ENCODE measurements at regions of chr7 and their contacts with region 1.

Region 1: DNA sequence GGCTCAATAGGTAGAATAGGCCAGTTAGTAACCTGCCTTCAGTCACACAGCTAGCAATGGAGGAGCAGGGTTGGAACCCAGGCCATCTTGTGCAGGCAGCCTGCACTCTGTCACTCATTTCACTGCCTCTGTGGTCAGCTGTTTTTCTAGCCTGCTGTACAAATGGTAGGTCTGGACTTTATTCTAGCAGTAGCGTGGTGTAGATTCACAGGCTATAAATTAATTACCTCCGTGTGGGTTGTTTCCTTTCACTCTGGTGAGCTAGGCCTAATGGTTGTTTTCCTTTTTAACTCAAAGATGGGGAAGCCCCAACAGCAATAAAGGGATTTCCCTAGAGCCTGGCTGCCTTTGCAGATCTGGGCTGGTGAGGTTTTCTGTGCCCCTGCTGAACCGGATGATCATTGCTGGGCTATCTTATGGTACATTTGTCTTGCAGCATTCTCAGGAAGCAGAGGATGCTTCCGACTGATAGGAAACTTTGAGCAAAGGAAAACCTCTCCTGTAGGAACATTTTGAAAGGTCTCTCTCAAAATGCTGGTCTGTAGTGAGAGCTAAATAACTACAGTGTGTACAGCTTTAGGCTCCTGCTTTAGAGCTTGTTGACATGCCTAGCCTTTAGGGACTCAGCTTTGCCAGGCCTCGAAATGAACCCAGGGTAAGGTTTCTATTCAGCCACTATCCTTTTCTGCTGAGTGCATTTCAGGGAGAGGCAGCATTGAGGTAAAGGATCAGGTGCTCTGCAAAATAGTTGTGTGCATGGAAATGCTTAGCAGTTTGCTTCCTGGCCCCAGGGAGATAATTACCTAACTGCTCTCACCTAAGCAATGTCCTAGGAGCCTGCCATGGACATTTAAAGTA is 157.4 kb downstream of the ST7 start:
- DNase-seq: peak; percentile 70
- ATAC-seq: peak; percentile 97
- H3K4me3 ChIP-seq: peak overlapping the region; percentile 41
- H3K27ac ChIP-seq: peak overlapping the region; percentile 63
- H3K4me1 ChIP-seq: peaks cover 10% of the 10 kb centered on the region
- H3K27me3 ChIP-seq: no peaks in the 10 kb centered on the region
- CTCF ChIP-seq: no peak
- EP300 ChIP-seq: 0 out of 4 replicates have a peak, but pooled peaks of 1 of the 2 experiments have one; percentile 20
- POLR2A ChIP-seq: 0 out of 2 replicates have a peak, but pooled peaks have one; percentile 21
- RAD21 ChIP-seq: 0 out of 2 replicates have a peak, but pooled peaks have one; percentile 6

Region 2: DNA sequence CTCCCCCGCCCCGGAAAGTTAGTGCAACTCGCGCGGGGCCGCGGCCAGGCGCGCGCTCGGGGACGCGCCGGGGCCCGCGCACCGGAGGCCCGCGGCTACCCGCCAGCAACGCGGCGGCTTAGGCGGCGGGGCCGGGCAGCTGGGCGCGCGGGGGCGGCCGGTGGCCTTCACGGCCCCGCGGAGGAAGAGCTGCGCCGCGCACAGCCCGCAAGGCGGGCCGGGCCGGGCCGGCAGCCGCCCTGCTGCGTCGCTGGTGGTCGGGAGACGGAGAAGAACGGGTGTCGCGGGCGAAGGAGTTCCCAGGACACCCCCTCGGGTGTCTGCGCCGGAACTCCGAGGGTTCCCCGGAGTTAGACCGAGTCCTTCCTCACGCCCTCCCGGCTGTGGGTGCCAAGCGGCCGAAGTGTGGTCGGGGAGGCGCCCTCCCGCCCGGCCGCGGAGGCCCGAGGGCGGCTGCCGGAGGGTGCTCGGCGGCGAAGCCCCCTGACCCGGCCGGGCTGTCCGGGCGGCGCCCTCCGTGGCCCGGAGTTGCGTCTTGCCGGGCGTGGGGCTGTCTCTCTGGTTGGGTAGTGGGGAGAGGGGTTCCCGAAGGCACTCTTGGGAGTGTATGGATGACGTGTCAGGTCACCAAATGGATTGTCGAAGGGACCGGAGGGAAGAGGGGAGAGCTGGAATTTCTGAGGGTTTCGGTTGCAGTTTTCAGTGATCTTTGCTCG is 156.8 kb before region 1 on chr7:
- CTCF ChIA-PET with region 1: interaction called, 3 read pairs
- POLR2A ChIA-PET with region 1: interaction called, 3 read pairs
- RAD21 ChIA-PET with region 1: interaction called, 10 read pairs
- SMC1A ChIA-PET with region 1: interaction called, 7 read pairs
- in situ Hi-C with region 1: no loop called
- intact Hi-C with region 1: no loop called
- DNase-seq: no peak
- ATAC-seq: peak; percentile 21
- H3K4me3 ChIP-seq: peak overlapping the region; percentile 79
- H3K27ac ChIP-seq: peak overlapping the region; percentile 98
- H3K4me1 ChIP-seq: peaks cover 22% of the 10 kb centered on the region
- H3K27me3 ChIP-seq: no peaks in the 10 kb centered on the region
- CTCF ChIP-seq: no peak
- EP300 ChIP-seq: peak in 1 of 2 experiments; percentile 19; a peak in 1 of 4 replicates
- POLR2A ChIP-seq: peak; percentile 62
- RAD21 ChIP-seq: no peak

Region 3: GRCh38 chr7:117008883-117009531 is 101.7 kb before region 1 on chr7:
- CTCF ChIA-PET with region 1: interaction called, 15 read pairs
- POLR2A ChIA-PET with region 1: interaction called, 4 read pairs
- RAD21 ChIA-PET with region 1: interaction called, 14 read pairs
- SMC1A ChIA-PET with region 1: interaction called, 158 read pairs
- in situ Hi-C with region 1: no loop called
- intact Hi-C with region 1: no loop called
- DNase-seq: no peak
- ATAC-seq: peak; percentile 9
- H3K4me3 ChIP-seq: 0 out of 2 replicates have a peak overlapping the region, but pooled peaks have one; percentile 9
- H3K27ac ChIP-seq: peak overlapping the region; percentile 100
- H3K4me1 ChIP-seq: peaks cover 46% of the 10 kb centered on the region
- H3K27me3 ChIP-seq: no peaks in the 10 kb centered on the region
- CTCF ChIP-seq: no peak
- EP300 ChIP-seq: peak in 1 of 2 experiments; percentile 50; a peak in 1 of 4 replicates
- POLR2A ChIP-seq: no peak
- RAD21 ChIP-seq: no peak

Region 4: DNA sequence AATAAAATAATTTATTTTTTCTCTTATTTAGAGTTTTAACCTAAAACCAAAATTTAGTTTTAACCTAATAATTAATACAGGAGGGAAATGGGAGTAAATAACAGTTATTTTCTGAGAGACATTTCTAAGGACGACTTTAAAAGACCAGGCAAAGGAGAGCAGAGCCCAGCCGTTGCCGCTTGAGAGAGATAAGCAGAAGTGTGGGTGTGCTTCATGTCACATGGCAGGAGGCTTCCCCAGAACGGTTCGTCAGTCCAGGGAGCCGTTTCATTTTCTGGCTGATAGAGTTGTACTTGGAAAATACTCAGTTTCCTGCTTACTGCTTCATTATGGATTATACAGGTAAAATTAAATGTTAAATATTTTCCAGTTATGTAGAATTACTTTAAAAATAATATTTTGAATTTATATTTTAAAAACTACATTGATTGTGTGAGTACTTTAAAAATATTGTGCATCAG is 96.0 kb before region 1 on chr7:
- CTCF ChIA-PET with region 1: interaction called, 15 read pairs
- POLR2A ChIA-PET with region 1: interaction called, 3 read pairs
- RAD21 ChIA-PET with region 1: interaction called, 14 read pairs
- SMC1A ChIA-PET with region 1: interaction called, 158 read pairs
- in situ Hi-C with region 1: no loop called
- intact Hi-C with region 1: no loop called
- DNase-seq: no peak
- ATAC-seq: peak; percentile 52
- H3K4me3 ChIP-seq: peak overlapping the region; percentile 66; the same call in 1 of the 2 replicates
- H3K27ac ChIP-seq: peak overlapping the region; percentile 79
- H3K4me1 ChIP-seq: peaks cover 43% of the 10 kb centered on the region
- H3K27me3 ChIP-seq: no peaks in the 10 kb centered on the region
- CTCF ChIP-seq: no peak
- EP300 ChIP-seq: no peak
- POLR2A ChIP-seq: peak; percentile 51; the same call in 1 of the 2 replicates
- RAD21 ChIP-seq: no peak

Region 5: DNA sequence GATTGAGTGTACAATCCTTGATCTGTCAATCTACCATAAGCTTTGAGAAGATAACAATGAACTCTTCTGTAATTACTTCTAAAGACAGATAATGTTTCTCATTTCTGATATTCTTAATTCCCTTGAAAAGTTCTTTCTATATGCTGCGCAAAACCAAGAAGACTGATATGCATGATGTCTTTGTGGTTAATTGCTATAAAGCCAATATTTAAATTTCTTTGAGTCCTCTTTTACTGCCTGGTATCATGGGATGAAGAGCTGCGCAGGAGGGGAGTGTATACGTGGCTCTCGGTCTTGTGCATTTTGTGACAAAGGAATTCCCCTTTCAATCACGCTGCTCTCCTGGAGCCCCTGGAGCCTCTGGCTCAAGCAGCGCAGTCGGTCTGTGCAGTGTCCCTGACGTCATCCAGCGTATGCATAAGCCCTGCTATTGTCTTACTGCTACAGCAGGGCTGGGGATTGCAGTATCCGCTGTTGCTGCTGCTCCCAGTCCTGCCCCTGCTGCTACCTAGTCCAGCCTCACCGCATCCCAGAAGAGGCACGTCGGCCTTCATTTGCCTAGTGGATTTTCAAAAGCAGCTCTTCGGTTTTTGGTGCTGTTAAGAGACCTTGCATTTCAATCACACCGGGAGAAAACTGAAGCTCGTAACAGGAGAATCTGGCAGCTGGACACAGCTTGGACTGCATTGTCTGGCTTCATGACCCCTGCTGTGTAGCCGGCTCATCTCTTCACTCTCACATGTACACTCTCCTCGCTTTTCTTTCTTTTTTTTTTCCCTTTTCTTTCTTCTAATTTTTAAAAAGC is 90.7 kb before region 1 on chr7:
- CTCF ChIA-PET with region 1: interaction called, 3 read pairs
- POLR2A ChIA-PET with region 1: interaction called, 4 read pairs
- RAD21 ChIA-PET with region 1: interaction called, 5 read pairs
- SMC1A ChIA-PET with region 1: interaction called, 12 read pairs
- in situ Hi-C with region 1: no loop called
- intact Hi-C with region 1: no loop called
- DNase-seq: no peak
- ATAC-seq: no peak
- H3K4me3 ChIP-seq: 0 out of 2 replicates have a peak overlapping the region, but pooled peaks have one; percentile 17
- H3K27ac ChIP-seq: no peak overlapping the region
- H3K4me1 ChIP-seq: peaks cover 30% of the 10 kb centered on the region
- H3K27me3 ChIP-seq: no peaks in the 10 kb centered on the region
- CTCF ChIP-seq: no peak
- EP300 ChIP-seq: no peak
- POLR2A ChIP-seq: no peak
- RAD21 ChIP-seq: no peak

Region 6: DNA sequence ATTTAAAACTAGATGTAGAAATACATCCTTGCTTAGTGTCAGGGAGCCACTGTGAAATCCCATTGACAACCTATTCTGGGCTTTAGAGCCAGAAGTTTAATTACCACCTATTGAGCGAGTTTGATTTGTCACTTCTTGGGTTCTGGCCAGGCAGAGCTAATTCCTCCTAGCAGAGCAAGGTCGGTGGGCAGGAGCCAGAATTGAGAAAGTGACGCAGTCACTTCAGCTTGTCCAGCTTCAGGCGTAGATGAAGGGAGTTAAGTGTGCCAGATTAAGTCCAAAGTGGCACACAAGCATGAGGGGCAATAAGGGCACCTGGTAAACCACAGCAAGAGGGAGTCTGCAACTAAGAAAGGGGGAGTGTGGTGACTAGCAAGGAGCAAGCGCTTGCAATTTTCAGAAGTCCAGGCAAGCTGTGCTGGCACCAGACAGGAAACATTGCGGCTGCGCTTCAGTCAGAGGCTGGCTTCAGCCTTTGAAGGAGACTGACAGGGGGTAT is 38.0 kb before region 1 on chr7:
- CTCF ChIA-PET with region 1: interaction called, 7 read pairs
- POLR2A ChIA-PET with region 1: interaction called, 5 read pairs
- RAD21 ChIA-PET with region 1: interaction called, 13 read pairs
- SMC1A ChIA-PET with region 1: interaction called, 10 read pairs
- in situ Hi-C with region 1: no loop called
- intact Hi-C with region 1: no loop called
- DNase-seq: no peak
- ATAC-seq: no peak
- H3K4me3 ChIP-seq: no peak overlapping the region
- H3K27ac ChIP-seq: no peak overlapping the region
- H3K4me1 ChIP-seq: peaks cover 5% of the 10 kb centered on the region; the same call in 1 of the 2 replicates
- H3K27me3 ChIP-seq: no peaks in the 10 kb centered on the region
- CTCF ChIP-seq: no peak
- EP300 ChIP-seq: no peak
- POLR2A ChIP-seq: no peak
- RAD21 ChIP-seq: no peak

Region 7: DNA sequence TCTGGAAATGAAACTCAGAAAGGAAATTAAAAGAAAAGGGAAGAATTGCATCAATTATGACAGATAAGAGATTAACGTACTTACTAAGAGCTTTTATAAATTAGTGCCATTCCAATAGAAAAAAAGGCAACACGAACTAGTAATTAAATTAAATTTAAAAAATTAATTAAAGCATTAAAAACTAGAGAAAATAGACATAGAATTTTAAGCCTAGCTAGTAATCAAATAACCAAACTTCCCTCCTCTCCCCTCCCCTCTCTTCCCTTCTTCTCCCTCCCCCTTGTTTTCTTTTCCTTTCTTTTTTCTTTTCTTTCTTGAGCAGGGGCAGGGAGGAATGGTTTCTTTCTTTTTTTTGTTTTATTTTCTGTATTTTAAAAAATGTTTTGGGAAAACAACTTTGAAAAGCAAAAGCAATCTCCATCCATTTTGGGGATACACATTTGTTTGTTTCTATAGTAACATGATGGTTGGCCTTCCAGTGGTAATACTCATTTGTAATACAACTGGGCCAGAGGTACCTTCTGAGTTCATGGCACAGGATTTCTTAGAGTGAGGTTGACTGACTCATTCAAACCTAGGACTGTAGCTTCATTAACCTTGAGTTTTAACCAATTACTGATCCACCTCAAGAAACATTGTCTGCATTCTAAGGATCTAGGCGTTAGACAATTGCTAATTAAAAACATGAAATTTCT is 24.8 kb before region 1 on chr7:
- CTCF ChIA-PET with region 1: interaction called, 7 read pairs
- POLR2A ChIA-PET with region 1: interaction called, 3 read pairs
- RAD21 ChIA-PET with region 1: no interaction called
- SMC1A ChIA-PET with region 1: interaction called, 11 read pairs
- in situ Hi-C with region 1: no loop called
- intact Hi-C with region 1: no loop called
- DNase-seq: no peak
- ATAC-seq: peak; percentile 69
- H3K4me3 ChIP-seq: no peak overlapping the region
- H3K27ac ChIP-seq: no peak overlapping the region
- H3K4me1 ChIP-seq: peaks cover 10% of the 10 kb centered on the region; the same call in 1 of the 2 replicates
- H3K27me3 ChIP-seq: no peaks in the 10 kb centered on the region
- CTCF ChIP-seq: no peak
- EP300 ChIP-seq: no peak
- POLR2A ChIP-seq: no peak
- RAD21 ChIP-seq: no peak

Measured in GM12878 (cell line).